Activated CD4-positive, alpha-beta T cell treated with anti-CD3 and anti-CD28 coated beads for 36 hours (primary cell): ENCODE measurements at regions of chr21 and their contacts with region 1.

Region 1: DNA sequence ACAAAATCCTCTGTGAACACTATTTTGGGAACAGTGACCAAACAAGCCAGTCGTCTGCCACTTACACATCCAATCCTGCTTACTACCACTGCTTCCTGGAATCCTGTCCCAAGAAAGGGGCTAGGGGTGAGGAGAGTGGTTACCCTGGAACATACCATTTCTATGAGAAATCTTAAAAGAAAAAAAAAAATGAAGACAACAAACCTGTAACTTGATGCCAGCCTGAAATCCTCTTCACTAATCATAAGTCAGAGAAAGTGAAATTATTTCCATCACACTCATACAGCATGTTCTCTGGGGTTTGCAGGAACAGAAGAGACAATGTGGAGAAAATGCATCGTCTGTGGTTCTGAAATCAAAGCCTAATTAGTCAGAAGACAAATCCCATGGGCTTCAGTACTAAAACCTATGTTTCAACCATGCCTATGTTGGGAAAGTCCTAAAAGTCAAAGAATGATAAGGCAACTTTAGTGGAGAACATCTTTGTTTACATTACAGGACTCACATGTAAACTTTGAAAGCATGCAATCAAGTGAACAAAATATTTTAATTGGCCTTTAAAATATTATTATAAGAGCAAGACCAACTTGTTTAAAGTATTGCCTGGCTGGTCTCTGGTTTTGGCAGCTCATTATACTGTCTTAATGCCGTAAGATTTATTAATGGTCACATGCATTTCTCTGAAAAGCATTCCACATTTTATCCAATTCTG is 220.7 kb downstream of the LTN1 start:
- DNase-seq: no peak
- ATAC-seq: peak; percentile 27
- H3K4me3 Mint-ChIP-seq: no peak overlapping the region
- H3K27ac Mint-ChIP-seq: peak overlapping the region; percentile 55
- H3K4me1 Mint-ChIP-seq: peaks cover 57% of the 10 kb centered on the region
- H3K27me3 Mint-ChIP-seq: no peaks in the 10 kb centered on the region

Region 2: DNA sequence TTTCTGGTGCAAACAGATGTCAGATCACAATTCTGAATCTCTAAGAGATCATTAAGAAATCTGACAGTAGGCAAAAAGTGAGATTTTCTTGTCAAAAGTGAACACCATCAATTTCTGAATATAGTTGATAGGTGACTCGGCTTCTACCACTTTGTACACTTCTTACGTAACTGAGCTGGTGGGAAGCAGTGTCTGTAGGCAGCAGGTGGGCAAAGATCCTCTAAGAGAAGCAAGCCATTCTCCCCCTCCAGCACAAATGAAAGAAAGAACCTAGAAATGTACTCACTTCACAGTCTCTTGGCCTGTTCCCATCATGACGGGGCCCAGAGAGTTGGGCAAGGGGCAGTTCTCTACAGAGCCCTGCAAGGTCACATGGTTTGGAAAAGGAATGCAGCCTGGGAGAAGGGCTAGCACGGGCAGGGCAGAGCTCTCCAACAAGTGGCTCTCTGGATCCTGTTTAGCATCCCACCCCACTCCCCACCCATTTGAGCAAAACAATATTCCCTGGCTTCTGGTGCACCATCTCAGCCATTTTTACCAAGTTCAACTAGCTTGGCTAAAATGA is 191.9 kb before region 1 on chr21:
- CTCF ChIA-PET with region 1: no interaction called
- POLR2A ChIA-PET with region 1: no interaction called
- intact Hi-C with region 1: no loop called
- DNase-seq: no peak
- ATAC-seq: no peak
- H3K4me3 Mint-ChIP-seq: no peak overlapping the region
- H3K27ac Mint-ChIP-seq: no peak overlapping the region
- H3K4me1 Mint-ChIP-seq: no peaks in the 10 kb centered on the region
- H3K27me3 Mint-ChIP-seq: no peaks in the 10 kb centered on the region

Region 3: GRCh38 chr21:28633839-28634555 is 137.9 kb before region 1 on chr21:
- CTCF ChIA-PET with region 1: no interaction called
- POLR2A ChIA-PET with region 1: no interaction called
- intact Hi-C with region 1: loop called in 1 of 2 experiments (anchors 5 kb)
- DNase-seq: peak; percentile 49
- ATAC-seq: peak; percentile 50
- H3K4me3 Mint-ChIP-seq: no peak overlapping the region
- H3K27ac Mint-ChIP-seq: no peak overlapping the region
- H3K4me1 Mint-ChIP-seq: peaks cover 19% of the 10 kb centered on the region
- H3K27me3 Mint-ChIP-seq: no peaks in the 10 kb centered on the region

Region 4: DNA sequence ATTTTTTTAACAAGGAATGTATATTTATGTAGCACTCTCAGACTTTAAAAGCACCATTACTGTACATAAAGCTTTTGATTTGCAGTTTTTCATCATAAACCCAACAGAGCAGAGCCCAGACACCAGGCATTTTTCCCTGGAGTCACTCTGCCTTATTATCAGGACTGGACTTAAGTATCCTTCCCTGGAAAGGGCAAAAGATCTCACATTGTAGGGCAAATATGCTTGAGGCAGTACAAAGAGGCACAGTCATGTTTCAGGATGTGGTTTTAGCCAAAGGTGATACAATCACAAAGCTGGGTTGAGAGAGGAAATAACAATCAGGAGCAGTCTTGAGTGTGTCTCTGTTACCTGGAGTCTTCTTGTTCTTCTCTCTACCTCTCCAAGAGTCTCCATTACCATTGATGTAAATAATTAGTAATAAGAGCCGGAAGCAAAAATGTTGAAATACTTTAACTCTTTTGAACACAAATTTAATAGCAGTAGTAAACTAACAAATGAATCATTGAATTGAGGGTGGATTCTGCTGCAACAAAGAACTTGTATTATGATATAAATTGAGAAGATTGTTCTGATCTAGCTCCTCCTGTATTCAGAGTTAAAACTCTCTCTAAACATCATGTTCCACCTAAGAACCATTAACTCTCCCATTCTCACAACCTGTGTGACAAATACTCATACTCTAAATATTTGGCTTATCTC is 60.2 kb after region 1 on chr21:
- CTCF ChIA-PET with region 1: no interaction called
- POLR2A ChIA-PET with region 1: no interaction called
- intact Hi-C with region 1: loop called in 1 of 2 experiments (anchors 5 kb)
- DNase-seq: no peak
- ATAC-seq: peak; percentile 93
- H3K4me3 Mint-ChIP-seq: no peak overlapping the region
- H3K27ac Mint-ChIP-seq: peak overlapping the region; percentile 71
- H3K4me1 Mint-ChIP-seq: peaks cover 65% of the 10 kb centered on the region
- H3K27me3 Mint-ChIP-seq: no peaks in the 10 kb centered on the region

Region 5: DNA sequence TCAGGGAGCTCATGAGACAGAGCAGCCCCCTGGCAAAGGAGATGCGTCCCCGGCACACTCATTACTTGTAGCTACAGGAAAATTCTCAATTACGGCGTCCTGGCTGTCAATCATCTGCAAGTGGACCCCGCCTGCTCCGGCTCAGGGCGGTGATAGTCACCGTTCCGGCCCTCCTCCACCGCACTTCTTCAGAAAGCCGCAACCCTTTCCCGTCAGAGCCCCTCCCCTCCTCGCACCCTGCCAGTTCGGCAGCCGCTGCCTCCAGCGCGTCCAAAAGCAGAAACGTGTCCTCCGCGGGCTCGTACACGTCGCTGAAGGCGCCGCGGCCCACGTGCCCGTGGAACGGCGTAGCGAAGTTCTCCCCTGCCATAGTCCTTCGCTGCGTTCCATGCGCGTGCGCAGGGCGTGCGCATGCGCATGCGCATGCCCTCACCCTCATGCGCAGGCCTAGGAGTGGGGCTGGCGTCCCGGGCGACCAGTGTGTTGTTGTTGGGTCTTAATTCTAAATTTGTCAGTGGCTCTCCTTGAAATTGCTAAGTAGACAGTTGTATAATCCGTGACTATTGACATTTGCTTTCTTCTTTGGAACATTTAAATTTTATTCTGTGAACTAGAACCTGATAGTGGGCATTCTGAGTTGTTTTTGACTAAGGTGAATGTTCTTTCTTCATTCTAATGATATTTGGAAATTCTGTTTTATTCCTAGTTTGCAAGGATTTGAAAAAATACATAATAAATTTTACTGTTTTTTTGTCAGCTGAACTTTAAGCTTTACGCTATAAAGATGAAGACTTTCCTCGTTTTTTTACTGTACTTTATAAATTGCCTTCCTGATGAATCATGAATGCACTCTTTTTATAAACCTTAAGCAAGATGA is 113.3 kb after region 1 on chr21:
- CTCF ChIA-PET with region 1: no interaction called
- POLR2A ChIA-PET with region 1: no interaction called
- intact Hi-C with region 1: loop called in 1 of 2 experiments (anchors 1 kb)
- DNase-seq: peak; percentile 95
- ATAC-seq: peak; percentile 96
- H3K4me3 Mint-ChIP-seq: peak overlapping the region; percentile 86
- H3K27ac Mint-ChIP-seq: peak overlapping the region; percentile 99
- H3K4me1 Mint-ChIP-seq: peaks cover 16% of the 10 kb centered on the region
- H3K27me3 Mint-ChIP-seq: no peaks in the 10 kb centered on the region

Region 6: DNA sequence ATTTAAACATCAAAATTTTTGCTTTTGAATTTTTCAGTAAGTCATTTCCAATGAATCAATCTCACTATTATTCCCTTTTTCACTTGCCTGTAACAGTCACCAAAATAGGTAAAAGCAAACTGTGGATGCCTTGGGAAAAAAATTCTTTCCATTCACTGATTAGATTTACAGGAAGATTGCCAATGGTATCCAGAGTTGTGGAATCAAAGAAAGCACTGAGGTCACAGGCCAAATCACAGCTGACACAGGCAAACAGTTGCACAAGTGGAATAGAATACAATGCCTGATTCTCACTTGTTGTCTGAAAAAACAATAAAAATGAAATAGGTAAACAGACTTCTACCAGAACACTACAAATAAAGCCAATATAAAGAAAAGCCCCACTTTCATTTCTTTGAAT is 172.3 kb after region 1 on chr21:
- CTCF ChIA-PET with region 1: no interaction called
- POLR2A ChIA-PET with region 1: no interaction called
- intact Hi-C with region 1: loop called in 1 of 2 experiments (anchors 2 kb)
- DNase-seq: no peak
- ATAC-seq: no peak
- H3K4me3 Mint-ChIP-seq: no peak overlapping the region
- H3K27ac Mint-ChIP-seq: no peak overlapping the region
- H3K4me1 Mint-ChIP-seq: peaks cover 1% of the 10 kb centered on the region
- H3K27me3 Mint-ChIP-seq: no peaks in the 10 kb centered on the region